ENCODE measurements at regions of chr6 and their contacts with region 1.

Region 1: GRCh38 chr6:142946181-142946923 is 1.4 kb upstream of the HIVEP2 start:
- DNase-seq: peak; percentile 87
- H3K4me3 Mint-ChIP-seq: peak overlapping the region; percentile 99
- H3K27ac Mint-ChIP-seq: peak overlapping the region; percentile 89
- H3K4me1 Mint-ChIP-seq: peaks cover 36% of the 10 kb centered on the region
- H3K27me3 Mint-ChIP-seq: no peaks in the 10 kb centered on the region

Region 2: GRCh38 chr6:142737368-142738034 is 208.9 kb before region 1 on chr6:
- CTCF ChIA-PET with region 1: no interaction called
- POLR2A ChIA-PET with region 1: no interaction called
- DNase-seq: no peak
- H3K4me3 Mint-ChIP-seq: no peak overlapping the region
- H3K27ac Mint-ChIP-seq: no peak overlapping the region
- H3K4me1 Mint-ChIP-seq: no peaks in the 10 kb centered on the region
- H3K27me3 Mint-ChIP-seq: no peaks in the 10 kb centered on the region

Region 3: GRCh38 chr6:142819603-142820337 is 126.6 kb before region 1 on chr6:
- CTCF ChIA-PET with region 1: interaction called, 4 read pairs
- POLR2A ChIA-PET with region 1: interaction called, 20 read pairs
- DNase-seq: peak; percentile 52
- H3K4me3 Mint-ChIP-seq: peak overlapping the region; percentile 79
- H3K27ac Mint-ChIP-seq: peak overlapping the region; percentile 92
- H3K4me1 Mint-ChIP-seq: peaks cover 64% of the 10 kb centered on the region
- H3K27me3 Mint-ChIP-seq: no peaks in the 10 kb centered on the region

Region 4: DNA sequence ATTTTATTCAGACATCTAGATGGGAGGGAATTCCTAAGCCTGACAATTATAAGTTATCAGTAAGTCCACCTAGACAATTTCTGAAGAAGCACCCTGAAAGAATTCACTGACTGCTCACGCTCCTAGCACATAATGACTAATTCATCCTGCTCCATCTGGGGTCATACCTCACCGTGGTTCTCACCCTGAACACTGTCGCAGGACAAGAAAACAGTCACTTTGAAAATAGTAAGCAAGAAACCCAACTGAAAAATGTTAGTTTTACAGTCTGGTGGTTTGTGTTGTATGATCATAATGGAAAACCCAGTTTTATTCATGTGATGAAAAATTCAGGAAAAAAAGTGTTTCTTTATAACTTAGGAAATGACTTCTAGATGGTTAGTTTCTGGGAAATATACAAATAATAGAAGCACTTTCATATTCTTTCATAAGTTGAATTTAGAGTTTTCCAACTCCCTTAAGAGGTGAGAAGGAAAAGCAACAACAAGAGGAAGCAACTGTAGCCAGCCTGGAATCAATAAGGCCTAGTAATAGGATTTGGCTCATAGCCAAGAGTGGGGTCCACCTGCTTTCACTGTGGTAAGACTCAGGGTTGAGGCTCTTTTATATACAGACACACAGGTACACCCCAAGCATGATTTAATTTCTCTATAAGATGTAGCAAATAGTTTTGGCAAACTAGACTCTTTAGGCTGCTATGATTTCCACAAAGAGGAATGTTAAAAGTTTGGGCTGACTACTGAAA is 95.5 kb before region 1 on chr6:
- CTCF ChIA-PET with region 1: interaction called, 4 read pairs
- POLR2A ChIA-PET with region 1: interaction called, 15 read pairs
- DNase-seq: peak; percentile 52
- H3K4me3 Mint-ChIP-seq: peak overlapping the region; percentile 4
- H3K27ac Mint-ChIP-seq: peak overlapping the region; percentile 44
- H3K4me1 Mint-ChIP-seq: peaks cover 93% of the 10 kb centered on the region
- H3K27me3 Mint-ChIP-seq: no peaks in the 10 kb centered on the region

Region 5: GRCh38 chr6:142871910-142872331 is 74.4 kb before region 1 on chr6:
- CTCF ChIA-PET with region 1: no interaction called
- POLR2A ChIA-PET with region 1: interaction called, 10 read pairs
- DNase-seq: peak; percentile 69
- H3K4me3 Mint-ChIP-seq: peak overlapping the region; percentile 11
- H3K27ac Mint-ChIP-seq: peak overlapping the region; percentile 56
- H3K4me1 Mint-ChIP-seq: peaks cover 76% of the 10 kb centered on the region
- H3K27me3 Mint-ChIP-seq: no peaks in the 10 kb centered on the region

Region 6: GRCh38 chr6:142902636-142903053 is 43.7 kb before region 1 on chr6:
- CTCF ChIA-PET with region 1: interaction called, 3 read pairs
- POLR2A ChIA-PET with region 1: interaction called, 142 read pairs
- DNase-seq: peak; percentile 80
- H3K4me3 Mint-ChIP-seq: peak overlapping the region; percentile 58
- H3K27ac Mint-ChIP-seq: peak overlapping the region; percentile 93
- H3K4me1 Mint-ChIP-seq: peaks cover 51% of the 10 kb centered on the region
- H3K27me3 Mint-ChIP-seq: no peaks in the 10 kb centered on the region

Region 7: GRCh38 chr6:142926494-142927270 is 19.7 kb before region 1 on chr6:
- CTCF ChIA-PET with region 1: interaction called, 9 read pairs
- POLR2A ChIA-PET with region 1: interaction called, 168 read pairs
- DNase-seq: peak; percentile 82
- H3K4me3 Mint-ChIP-seq: peak overlapping the region; percentile 84
- H3K27ac Mint-ChIP-seq: peak overlapping the region; percentile 87
- H3K4me1 Mint-ChIP-seq: peaks cover 42% of the 10 kb centered on the region
- H3K27me3 Mint-ChIP-seq: no peaks in the 10 kb centered on the region

Region 8: DNA sequence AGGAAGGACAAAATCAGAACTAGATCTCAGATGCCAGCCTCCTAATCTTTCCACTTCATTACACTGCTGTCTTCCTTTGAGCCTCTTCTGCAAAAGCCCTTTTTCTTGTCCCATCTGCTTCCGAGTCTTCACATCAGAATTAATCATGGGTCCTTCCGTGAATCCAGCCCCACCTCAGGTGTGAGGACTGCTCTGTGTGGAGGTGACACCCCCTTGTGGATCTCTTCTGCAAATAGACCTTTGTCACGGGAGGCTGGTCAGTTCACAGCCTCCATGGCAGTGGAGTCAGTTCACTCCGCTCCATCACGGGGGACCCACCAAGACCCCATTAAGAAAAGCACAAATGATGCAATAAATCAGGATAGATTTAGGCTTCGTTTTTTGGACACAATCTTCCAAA is 333.0 kb after region 1 on chr6:
- CTCF ChIA-PET with region 1: no interaction called
- POLR2A ChIA-PET with region 1: no interaction called
- DNase-seq: no peak
- H3K4me3 Mint-ChIP-seq: no peak overlapping the region
- H3K27ac Mint-ChIP-seq: no peak overlapping the region
- H3K4me1 Mint-ChIP-seq: peaks cover 16% of the 10 kb centered on the region
- H3K27me3 Mint-ChIP-seq: no peaks in the 10 kb centered on the region

Measured in activated CD4-positive, alpha-beta memory T cell treated with anti-CD3 and anti-CD28 coated beads, Interleukin-2, amount 10 ng/mL, durations not matched to agents 7 days and 5 days (primary cell).